ENCODE measurements at regions of chr16 and their contacts with region 1.

Region 1: DNA sequence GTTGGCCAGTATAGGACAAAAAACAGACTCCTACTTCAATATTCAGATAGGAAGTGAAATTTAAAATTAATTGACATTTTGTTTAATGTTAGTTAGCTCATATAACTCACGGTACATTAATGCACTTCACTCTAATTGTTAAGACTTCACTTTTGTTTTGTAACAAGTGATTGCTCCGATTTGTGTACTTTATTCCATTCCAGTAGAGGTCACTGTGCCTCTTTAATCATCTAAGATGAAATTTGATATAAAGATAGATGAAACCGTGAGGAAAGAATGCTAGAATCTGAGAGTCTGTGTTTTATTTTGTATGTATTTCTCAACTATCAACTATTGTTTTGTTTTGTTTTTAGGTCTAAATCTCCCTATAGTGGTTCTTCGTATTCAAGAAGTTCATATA is 29.0 kb downstream of the RBBP6 start:
- DNase-seq: no peak
- H3K4me3 ChIP-seq: no peak overlapping the region
- H3K27ac ChIP-seq: no peak overlapping the region
- H3K4me1 ChIP-seq: no peaks in the 10 kb centered on the region
- H3K27me3 ChIP-seq: no peaks in the 10 kb centered on the region
- CTCF ChIP-seq: peak; percentile 27 to 38 (median 38)
- EP300 ChIP-seq: no peak
- POLR2A ChIP-seq: no peak

Region 2: DNA sequence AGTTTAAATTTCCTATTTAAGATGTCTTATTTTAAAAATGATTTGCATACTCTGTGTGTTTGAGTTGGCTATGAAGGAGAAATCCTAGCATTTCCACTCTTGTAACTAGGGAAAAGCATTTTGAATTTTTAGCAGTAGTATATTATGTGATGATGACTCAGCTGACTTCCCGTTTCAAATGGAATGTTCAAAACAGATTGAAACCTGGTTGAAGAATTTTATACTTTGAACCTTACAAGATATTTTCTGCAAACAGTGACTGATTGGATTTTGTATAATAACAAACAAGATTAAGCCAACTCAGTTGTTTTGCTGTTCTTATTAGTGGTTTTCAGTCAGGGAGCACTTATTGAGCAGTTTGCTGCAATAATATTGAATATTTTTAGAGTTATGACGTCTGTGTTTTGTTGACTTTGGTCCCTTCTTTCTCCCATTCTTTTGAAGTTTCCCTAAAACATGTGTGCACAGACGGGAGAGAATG is 169.0 kb after region 1 on chr16:
- intact Hi-C with region 1: no loop called
- DNase-seq: no peak
- H3K4me3 ChIP-seq: peak overlapping the region in 3 of 4 donors; percentile 16 to 28 (median 17)
- H3K27ac ChIP-seq: peak overlapping the region; percentile 91 to 94 (median 94)
- H3K4me1 ChIP-seq: peaks cover 92 to 100% (median 99%) of the 10 kb centered on the region in 4 donors
- H3K27me3 ChIP-seq: no peaks in the 10 kb centered on the region
- CTCF ChIP-seq: no peak
- EP300 ChIP-seq: no peak
- POLR2A ChIP-seq: no peak

Region 3: DNA sequence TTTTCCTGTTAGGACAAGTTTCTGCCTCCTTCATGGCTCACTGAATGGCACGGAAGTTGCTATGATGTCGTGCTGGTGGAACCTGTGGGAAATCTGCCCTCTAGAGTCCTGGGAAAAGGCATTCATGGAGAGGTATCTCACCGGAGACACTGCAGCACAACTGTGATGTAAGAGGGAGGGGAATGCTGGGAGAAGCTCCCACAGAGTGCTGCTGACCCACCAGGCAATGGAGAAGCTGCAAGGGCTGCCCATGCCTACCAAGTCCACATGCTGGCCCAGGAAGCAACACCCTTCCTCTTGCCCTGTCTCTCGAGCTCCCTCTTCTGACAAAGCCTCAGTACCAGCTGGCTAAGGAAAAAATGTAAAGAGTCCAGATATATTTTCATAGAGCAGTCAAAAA is 232.2 kb after region 1 on chr16:
- intact Hi-C with region 1: loop called (anchors 5 kb)
- DNase-seq: no peak
- H3K4me3 ChIP-seq: no peak overlapping the region
- H3K27ac ChIP-seq: no peak overlapping the region
- H3K4me1 ChIP-seq: no peaks in the 10 kb centered on the region
- H3K27me3 ChIP-seq: no peaks in the 10 kb centered on the region
- CTCF ChIP-seq: no peak
- EP300 ChIP-seq: no peak
- POLR2A ChIP-seq: no peak

Region 4: GRCh38 chr16:24819462-24820040 is 251.2 kb after region 1 on chr16:
- intact Hi-C with region 1: loop called (anchors 5 kb)
- DNase-seq: no peak
- H3K4me3 ChIP-seq: no peak overlapping the region
- H3K27ac ChIP-seq: peak overlapping the region in 2 of 4 donors; percentile 4 to 36
- H3K4me1 ChIP-seq: peaks cover 0 to 7% (median 4%) of the 10 kb centered on the region in 4 donors
- H3K27me3 ChIP-seq: no peaks in the 10 kb centered on the region
- CTCF ChIP-seq: no peak
- EP300 ChIP-seq: no peak
- POLR2A ChIP-seq: no peak